ENCODE measurements at regions of chr17 and their contacts with region 1.

Region 1: GRCh38 chr17:62109378-62109902 is 44.4 kb upstream of the MED13 start:
- DNase-seq: peak; percentile 95
- ATAC-seq: peak; percentile 99
- H3K4me3 ChIP-seq: no peak overlapping the region
- H3K27ac ChIP-seq: no peak overlapping the region
- H3K4me1 ChIP-seq: peaks cover 0 to 16% of the 10 kb centered on the region in 2 experiments; a peak in 2 of 4 replicates
- H3K27me3 ChIP-seq: no peaks in the 10 kb centered on the region
- CTCF ChIP-seq: peak; percentile 99 to 100 (median 99)
- POLR2A ChIP-seq: no peak
- RAD21 ChIP-seq: peak; percentile 100

Region 2: DNA sequence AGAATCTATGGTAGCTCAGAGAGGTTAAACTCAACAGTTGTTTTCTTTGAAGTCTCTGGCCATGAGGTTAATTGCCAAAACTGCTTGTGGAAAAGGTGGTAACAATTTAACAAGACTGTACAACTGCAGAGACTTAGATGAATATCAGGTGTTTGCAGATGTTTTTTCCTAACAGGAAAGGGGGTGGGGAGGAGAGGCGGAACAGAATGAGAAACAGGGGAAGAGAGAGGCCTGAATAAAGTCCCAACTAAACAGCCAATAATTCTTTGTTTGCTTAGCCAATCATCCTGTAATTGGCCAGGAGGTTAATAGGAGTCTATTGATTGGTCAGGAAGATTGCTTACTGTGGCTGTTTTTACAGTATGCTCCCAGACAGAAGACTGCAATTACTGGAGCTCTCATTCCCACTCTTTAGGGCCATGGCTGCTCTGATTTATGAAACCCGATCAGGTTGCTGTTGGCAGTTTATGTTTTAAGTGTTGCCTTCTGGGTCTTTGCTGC is 959.5 kb before region 1 on chr17:
- CTCF ChIA-PET with region 1: no interaction called
- POLR2A ChIA-PET with region 1: no interaction called
- RAD21 ChIA-PET with region 1: no interaction called
- intact Hi-C with region 1: no loop called
- DNase-seq: no peak
- ATAC-seq: peak; percentile 49; the same call in 1 of the 2 replicates
- H3K4me3 ChIP-seq: no peak overlapping the region
- H3K27ac ChIP-seq: no peak overlapping the region
- H3K4me1 ChIP-seq: no peaks in the 10 kb centered on the region
- H3K27me3 ChIP-seq: no peaks in the 10 kb centered on the region
- CTCF ChIP-seq: no peak
- POLR2A ChIP-seq: no peak
- RAD21 ChIP-seq: no peak

Region 3: GRCh38 chr17:61574542-61575174 is 534.8 kb before region 1 on chr17:
- CTCF ChIA-PET with region 1: interaction called, 10 read pairs
- POLR2A ChIA-PET with region 1: no interaction called
- RAD21 ChIA-PET with region 1: interaction called in 1 of 2 experiments, 5 read pairs
- intact Hi-C with region 1: loop called (anchors 10 kb)
- DNase-seq: peak; percentile 74
- ATAC-seq: peak; percentile 92
- H3K4me3 ChIP-seq: peak overlapping the region in 1 of 2 experiments; percentile 6; a peak in 2 of 4 replicates
- H3K27ac ChIP-seq: peak overlapping the region; percentile 66
- H3K4me1 ChIP-seq: peaks cover 28 to 41% of the 10 kb centered on the region in 2 experiments
- H3K27me3 ChIP-seq: no peaks in the 10 kb centered on the region
- CTCF ChIP-seq: peak; percentile 57 to 89 (median 67)
- POLR2A ChIP-seq: no peak
- RAD21 ChIP-seq: peak; percentile 96

Region 4: DNA sequence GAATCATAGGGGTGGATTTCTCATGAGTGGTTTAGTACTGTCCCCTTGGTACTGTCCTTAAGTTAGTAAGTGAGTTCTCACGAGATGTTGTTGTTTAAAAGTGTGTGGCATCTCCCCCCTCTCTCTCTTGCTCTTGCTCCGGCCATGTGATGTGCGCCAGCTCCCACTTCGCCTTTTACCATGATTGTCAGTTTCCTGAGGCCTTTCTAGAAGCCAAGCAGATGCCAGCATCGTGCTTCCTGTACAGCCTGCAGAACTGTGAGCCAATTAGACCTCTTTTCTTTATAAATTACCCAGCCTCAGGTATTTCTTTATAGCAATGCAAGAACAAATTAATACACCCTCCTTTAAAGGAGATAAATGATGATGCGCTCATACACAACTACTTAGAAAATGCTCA is 468.4 kb before region 1 on chr17:
- CTCF ChIA-PET with region 1: interaction called, 40 read pairs
- POLR2A ChIA-PET with region 1: no interaction called
- RAD21 ChIA-PET with region 1: interaction called, 6 to 14 read pairs
- intact Hi-C with region 1: loop called (anchors 1 kb)
- DNase-seq: no peak
- ATAC-seq: no peak
- H3K4me3 ChIP-seq: no peak overlapping the region
- H3K27ac ChIP-seq: no peak overlapping the region
- H3K4me1 ChIP-seq: no peaks in the 10 kb centered on the region
- H3K27me3 ChIP-seq: no peaks in the 10 kb centered on the region
- CTCF ChIP-seq: no peak
- POLR2A ChIP-seq: no peak
- RAD21 ChIP-seq: no peak

Region 5: GRCh38 chr17:61862975-61863800 is 246.3 kb before region 1 on chr17 and contains the start of gene BRIP1:
- CTCF ChIA-PET with region 1: interaction called, 11 read pairs
- POLR2A ChIA-PET with region 1: no interaction called
- RAD21 ChIA-PET with region 1: interaction called, 4 to 8 read pairs
- intact Hi-C with region 1: loop called (anchors 1 kb)
- DNase-seq: peak; percentile 93
- ATAC-seq: peak; percentile 99
- H3K4me3 ChIP-seq: peak within 1 kb of the TSS; percentile 82 to 83
- H3K27ac ChIP-seq: peak within 1 kb of the TSS; percentile 59
- H3K4me1 ChIP-seq: peaks cover 13 to 20% of the 10 kb centered on the region in 2 experiments; a peak in 3 of 4 replicates
- H3K27me3 ChIP-seq: no peaks in the 10 kb centered on the region
- CTCF ChIP-seq: no peak
- POLR2A ChIP-seq: no peak
- RAD21 ChIP-seq: no peak
- total RNA-seq, gene BRIP1: 22.2 TPM

Region 6: DNA sequence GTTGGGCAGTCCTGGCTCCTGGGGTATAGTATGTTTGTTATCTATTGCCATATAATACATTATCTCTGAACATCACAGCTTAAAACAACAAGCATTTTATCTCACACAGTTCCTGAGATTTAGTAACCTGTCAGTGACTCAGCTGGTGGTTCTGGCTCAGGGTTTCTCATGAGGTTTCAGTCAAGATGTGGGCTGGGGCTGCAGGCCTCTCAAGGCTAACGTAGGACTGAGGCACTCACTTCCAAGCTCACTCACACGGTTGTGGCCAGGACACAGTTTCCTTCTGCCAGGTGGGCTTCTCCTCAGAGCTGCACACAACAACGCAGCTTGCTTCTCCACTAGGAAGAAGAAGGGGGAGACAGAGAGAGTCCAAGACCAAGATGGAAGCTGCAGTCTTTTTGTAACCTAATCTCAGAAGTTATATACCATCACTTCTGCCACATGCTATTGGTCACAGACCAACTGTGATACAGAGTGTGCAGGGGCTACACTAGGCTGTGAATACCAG is 34.1 kb before region 1 on chr17:
- CTCF ChIA-PET with region 1: interaction called, 19 read pairs
- POLR2A ChIA-PET with region 1: no interaction called
- RAD21 ChIA-PET with region 1: no interaction called
- intact Hi-C with region 1: no loop called
- DNase-seq: no peak
- ATAC-seq: 0 out of 2 replicates have a peak, but pooled peaks have one; percentile 11
- H3K4me3 ChIP-seq: no peak overlapping the region
- H3K27ac ChIP-seq: no peak overlapping the region
- H3K4me1 ChIP-seq: no peaks in the 10 kb centered on the region
- H3K27me3 ChIP-seq: no peaks in the 10 kb centered on the region
- CTCF ChIP-seq: no peak
- POLR2A ChIP-seq: no peak
- RAD21 ChIP-seq: no peak

Region 7: GRCh38 chr17:62121025-62121730 is 11.7 kb after region 1 on chr17:
- CTCF ChIA-PET with region 1: interaction called, 12 read pairs
- POLR2A ChIA-PET with region 1: no interaction called
- RAD21 ChIA-PET with region 1: interaction called in 1 of 2 experiments, 5 read pairs
- intact Hi-C with region 1: no loop called
- DNase-seq: no peak
- ATAC-seq: no peak
- H3K4me3 ChIP-seq: no peak overlapping the region
- H3K27ac ChIP-seq: no peak overlapping the region
- H3K4me1 ChIP-seq: peaks cover 5 to 16% of the 10 kb centered on the region in 2 experiments; a peak in 3 of 4 replicates
- H3K27me3 ChIP-seq: no peaks in the 10 kb centered on the region
- CTCF ChIP-seq: no peak
- POLR2A ChIP-seq: no peak
- RAD21 ChIP-seq: no peak

Region 8: DNA sequence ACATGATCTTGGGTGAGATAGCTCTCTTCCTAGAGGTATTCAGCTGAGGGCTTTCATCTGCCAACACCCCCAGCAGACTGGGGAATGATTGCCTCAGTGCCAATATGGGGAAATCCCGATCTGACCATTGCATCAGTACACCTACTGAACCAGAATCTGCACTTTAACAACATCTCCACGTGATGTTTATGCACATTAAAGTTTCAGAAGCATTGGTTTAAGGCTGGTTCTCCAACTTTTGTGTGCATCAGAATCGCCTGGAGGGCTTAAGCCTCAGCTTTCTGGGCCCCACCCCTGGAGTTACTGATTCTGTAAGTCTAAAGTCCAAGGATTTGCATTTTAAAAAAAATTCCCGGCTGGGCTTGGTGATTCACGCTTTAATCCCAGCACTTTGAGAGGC is 79.3 kb after region 1 on chr17:
- CTCF ChIA-PET with region 1: no interaction called
- POLR2A ChIA-PET with region 1: no interaction called
- RAD21 ChIA-PET with region 1: no interaction called
- intact Hi-C with region 1: no loop called
- DNase-seq: no peak
- ATAC-seq: no peak
- H3K4me3 ChIP-seq: no peak overlapping the region
- H3K27ac ChIP-seq: no peak overlapping the region
- H3K4me1 ChIP-seq: no peaks in the 10 kb centered on the region; a peak in 2 of 4 replicates
- H3K27me3 ChIP-seq: no peaks in the 10 kb centered on the region
- CTCF ChIP-seq: no peak
- POLR2A ChIP-seq: no peak
- RAD21 ChIP-seq: no peak